ENCODE measurements at regions of chr12 and their contacts with region 1.

Region 1: GRCh38 chr12:1576410-1577241 is 17.8 kb downstream of the FBXL14 start:
- DNase-seq: peak; percentile 62
- H3K4me3 ChIP-seq: peak overlapping the region; percentile 20
- H3K27ac ChIP-seq: peak overlapping the region; percentile 69
- H3K4me1 ChIP-seq: peaks cover 41% of the 10 kb centered on the region
- H3K27me3 ChIP-seq: no peaks in the 10 kb centered on the region
- CTCF ChIP-seq: no peak

Region 2: GRCh38 chr12:1073652-1074051 is 503.0 kb before region 1 on chr12:
- CTCF ChIA-PET with region 1: no interaction called
- POLR2A ChIA-PET with region 1: no interaction called
- intact Hi-C with region 1: no loop called
- DNase-seq: no peak
- H3K4me3 ChIP-seq: no peak overlapping the region
- H3K27ac ChIP-seq: no peak overlapping the region
- H3K4me1 ChIP-seq: peaks cover 13% of the 10 kb centered on the region
- H3K27me3 ChIP-seq: no peaks in the 10 kb centered on the region
- CTCF ChIP-seq: no peak

Region 3: DNA sequence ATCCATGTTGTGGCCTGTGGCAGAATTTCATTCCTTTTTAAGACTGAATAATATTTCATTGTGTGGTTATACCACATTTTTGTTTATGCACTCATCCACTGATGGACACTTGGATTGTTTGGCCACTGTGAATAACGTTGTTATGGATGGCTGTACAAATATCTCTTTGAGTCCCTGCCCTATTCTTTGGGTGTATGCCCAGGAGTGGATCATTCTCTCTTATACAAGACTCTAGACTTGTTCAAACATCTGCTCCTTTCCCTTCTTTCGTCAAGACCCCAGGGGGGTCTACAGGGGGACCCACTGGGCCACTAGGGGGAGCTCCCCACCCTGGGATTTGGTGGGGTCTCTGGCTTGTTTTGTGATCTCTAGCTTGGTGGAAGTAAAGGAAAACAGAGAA is 59.6 kb before region 1 on chr12:
- CTCF ChIA-PET with region 1: interaction called, 3 read pairs
- POLR2A ChIA-PET with region 1: no interaction called
- intact Hi-C with region 1: loop called (anchors 5 kb)
- DNase-seq: peak; percentile 62
- H3K4me3 ChIP-seq: no peak overlapping the region
- H3K27ac ChIP-seq: no peak overlapping the region
- H3K4me1 ChIP-seq: no peaks in the 10 kb centered on the region
- H3K27me3 ChIP-seq: no peaks in the 10 kb centered on the region
- CTCF ChIP-seq: peak; percentile 85

Measured in A673 (cell line).